Transverse colon (tissue), 4 donors: ENCODE measurements at regions of chr19 and their contacts with region 1.

Region 1: DNA sequence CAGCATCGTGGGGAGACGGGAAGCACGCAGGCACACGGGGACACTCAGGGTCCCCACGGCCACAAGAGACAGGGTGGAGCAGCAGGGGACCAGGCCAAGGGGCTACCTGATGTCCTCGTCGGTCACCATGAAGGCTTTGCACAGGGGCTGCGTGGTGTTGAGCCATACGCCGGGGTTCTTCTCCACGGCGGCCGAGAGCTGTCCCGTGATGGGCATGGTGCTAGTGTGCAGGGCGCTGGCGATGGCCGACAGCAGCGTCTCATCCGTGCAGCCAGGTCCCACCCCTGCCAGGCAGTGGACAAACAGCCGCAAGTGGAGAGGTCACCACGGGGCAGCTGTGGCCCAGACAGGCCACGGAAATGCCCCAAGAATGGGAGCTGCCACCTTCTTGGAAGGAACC is 11.7 kb downstream of the MBD3 start:
- DNase-seq: no peak
- H3K4me3 ChIP-seq: no peak overlapping the region
- H3K27ac ChIP-seq: no peak overlapping the region
- H3K4me1 ChIP-seq: no peaks in the 10 kb centered on the region
- H3K27me3 ChIP-seq: no peaks in the 10 kb centered on the region
- CTCF ChIP-seq: no peak
- EP300 ChIP-seq: no peak
- POLR2A ChIP-seq: no peak

Region 2: DNA sequence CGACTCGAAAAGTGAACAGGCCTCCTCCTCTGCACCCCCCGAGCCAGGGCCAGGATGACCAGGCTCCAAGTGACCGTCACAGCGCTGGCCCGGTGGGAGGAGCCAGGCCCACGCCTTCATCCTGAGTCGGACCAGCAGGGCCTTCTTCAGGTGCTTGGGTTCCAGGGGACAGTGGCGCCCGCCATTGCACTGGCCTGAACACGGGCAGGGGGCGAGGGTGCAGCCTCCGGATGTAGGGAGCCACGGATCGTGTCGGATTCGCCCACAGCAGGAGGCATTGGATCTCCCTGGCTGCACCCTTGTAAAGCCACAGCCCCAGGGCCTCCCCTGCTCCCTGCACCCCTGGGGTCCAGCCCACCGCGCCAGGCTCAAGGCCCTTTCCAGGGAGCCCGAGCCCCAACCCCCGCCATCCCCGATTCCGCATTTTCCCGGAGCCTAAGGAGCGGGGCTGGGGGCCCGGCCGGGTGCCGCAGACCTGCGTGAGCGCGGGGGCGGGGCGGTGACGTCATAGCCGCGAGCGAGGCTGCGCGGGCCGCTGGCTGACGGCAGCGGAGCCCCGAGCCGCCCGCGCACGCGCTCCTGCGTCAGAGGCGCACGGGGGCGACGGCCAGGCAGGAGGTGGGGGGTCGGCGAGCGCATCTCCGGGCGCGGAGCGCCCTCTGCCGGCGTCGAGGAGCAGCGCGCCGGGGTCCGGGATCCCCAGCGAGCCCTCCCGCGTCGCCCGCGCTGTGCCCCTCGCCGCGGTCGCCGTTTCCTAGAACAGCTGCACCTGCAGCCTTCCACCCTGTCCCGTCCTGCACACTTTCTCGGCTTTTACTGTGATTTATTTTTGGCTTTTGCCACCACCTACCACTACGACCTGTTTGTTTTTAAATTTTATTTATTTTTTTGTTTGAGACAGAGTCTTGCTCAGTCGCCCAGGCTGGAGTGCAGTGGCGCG is 340.9 kb before region 1 on chr19:
- in situ Hi-C with region 1: no loop called
- intact Hi-C with region 1: no loop called
- DNase-seq: peak; percentile 88
- H3K4me3 ChIP-seq: peak overlapping the region in 3 of 4 donors; percentile 8 to 86 (median 29)
- H3K27ac ChIP-seq: peak overlapping the region; percentile 98 to 99 (median 98)
- H3K4me1 ChIP-seq: peaks cover 50 to 63% (median 55%) of the 10 kb centered on the region in 4 donors
- H3K27me3 ChIP-seq: peaks cover 29% of the 10 kb centered on the region
- CTCF ChIP-seq: peak; percentile 59 to 93 (median 82)
- EP300 ChIP-seq: no peak
- POLR2A ChIP-seq: no peak

Region 3: GRCh38 chr19:1568320-1569019 is 12.5 kb before region 1 on chr19 and contains the start of gene MEX3D:
- in situ Hi-C with region 1: no loop called
- intact Hi-C with region 1: no loop called
- DNase-seq: peak; percentile 87
- H3K4me3 ChIP-seq: peak within 1 kb of the TSS; percentile 62 to 74 (median 67)
- H3K27ac ChIP-seq: peak within 1 kb of the TSS; percentile 82 to 90 (median 88)
- H3K4me1 ChIP-seq: peaks cover 3 to 20% (median 17%) of the 10 kb centered on the region in 4 donors
- H3K27me3 ChIP-seq: peaks cover 7% of the 10 kb centered on the region
- CTCF ChIP-seq: no peak
- EP300 ChIP-seq: no peak
- POLR2A ChIP-seq: no peak
- total RNA-seq, gene MEX3D: 20.8 to 100 (median 27.8) TPM

Region 4: GRCh38 chr19:1683869-1684572 is 103.0 kb after region 1 on chr19:
- in situ Hi-C with region 1: no loop called
- intact Hi-C with region 1: loop called (anchors 1 kb)
- DNase-seq: no peak
- H3K4me3 ChIP-seq: no peak overlapping the region
- H3K27ac ChIP-seq: no peak overlapping the region
- H3K4me1 ChIP-seq: no peaks in the 10 kb centered on the region
- H3K27me3 ChIP-seq: peaks cover 80% of the 10 kb centered on the region
- CTCF ChIP-seq: no peak
- EP300 ChIP-seq: no peak
- POLR2A ChIP-seq: no peak